OCI-LY7 (cell line): ENCODE measurements at regions of chrX and their contacts with region 1.

Region 1: DNA sequence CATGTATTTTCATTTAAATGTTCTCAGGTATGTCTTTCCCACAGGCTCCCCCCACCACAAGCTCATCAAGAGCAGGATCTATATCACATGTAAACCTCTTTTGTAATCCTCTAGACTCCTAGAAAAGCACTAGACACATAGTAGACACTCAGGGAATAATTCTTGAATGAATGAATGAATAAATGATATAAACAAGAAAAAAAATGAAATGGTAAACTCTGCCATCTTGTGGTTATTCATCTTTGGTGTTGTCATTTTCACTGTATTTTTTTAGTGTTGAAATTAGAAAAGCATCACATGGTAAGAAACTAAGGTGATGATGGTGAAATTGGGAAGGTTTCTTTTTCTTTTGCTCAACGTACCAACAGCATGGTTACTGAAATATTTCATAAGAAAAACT is 34.2 kb upstream of the C1GALT1C1 start:
- DNase-seq: peak; percentile 49
- H3K4me3 ChIP-seq: no peak overlapping the region
- H3K27ac ChIP-seq: no peak overlapping the region
- H3K4me1 ChIP-seq: no peaks in the 10 kb centered on the region
- CTCF ChIP-seq: peak; percentile 75

Region 2: GRCh38 chrX:120350450-120351138 is 313.5 kb before region 1 on chrX:
- CTCF ChIA-PET with region 1: no interaction called
- POLR2A ChIA-PET with region 1: no interaction called
- intact Hi-C with region 1: no loop called
- DNase-seq: no peak
- H3K4me3 ChIP-seq: no peak overlapping the region
- H3K27ac ChIP-seq: no peak overlapping the region
- H3K4me1 ChIP-seq: no peaks in the 10 kb centered on the region
- CTCF ChIP-seq: no peak

Region 3: GRCh38 chrX:120499301-120500072 is 164.6 kb before region 1 on chrX:
- CTCF ChIA-PET with region 1: interaction called, 4 read pairs
- POLR2A ChIA-PET with region 1: interaction called, 4 read pairs
- intact Hi-C with region 1: loop called (anchors 1 kb)
- DNase-seq: no peak
- H3K4me3 ChIP-seq: no peak overlapping the region
- H3K27ac ChIP-seq: no peak overlapping the region
- H3K4me1 ChIP-seq: no peaks in the 10 kb centered on the region
- CTCF ChIP-seq: no peak

Region 4: DNA sequence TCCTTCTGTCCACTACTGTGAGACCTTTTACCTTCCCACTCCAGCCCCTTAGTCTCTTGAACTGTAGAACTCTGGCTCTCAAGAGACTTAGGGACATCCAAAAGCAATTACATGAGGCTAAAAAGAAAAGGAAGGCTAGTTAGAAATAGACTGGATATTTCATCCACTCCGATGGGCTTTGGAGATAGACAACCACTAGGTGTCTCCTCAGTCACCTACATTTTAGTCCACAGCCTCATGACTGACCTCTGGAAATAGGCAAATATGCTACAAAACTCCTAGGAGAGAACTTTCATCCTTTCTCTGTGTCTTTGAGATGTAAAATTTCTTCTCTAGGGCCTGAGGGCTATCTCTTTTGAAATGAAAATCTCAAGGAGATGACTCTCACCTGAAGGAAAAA is 149.8 kb before region 1 on chrX:
- CTCF ChIA-PET with region 1: no interaction called
- POLR2A ChIA-PET with region 1: interaction called, 4 read pairs
- intact Hi-C with region 1: loop called (anchors 1 kb)
- DNase-seq: peak; percentile 45
- H3K4me3 ChIP-seq: no peak overlapping the region
- H3K27ac ChIP-seq: no peak overlapping the region
- H3K4me1 ChIP-seq: no peaks in the 10 kb centered on the region
- CTCF ChIP-seq: peak; percentile 77

Region 5: DNA sequence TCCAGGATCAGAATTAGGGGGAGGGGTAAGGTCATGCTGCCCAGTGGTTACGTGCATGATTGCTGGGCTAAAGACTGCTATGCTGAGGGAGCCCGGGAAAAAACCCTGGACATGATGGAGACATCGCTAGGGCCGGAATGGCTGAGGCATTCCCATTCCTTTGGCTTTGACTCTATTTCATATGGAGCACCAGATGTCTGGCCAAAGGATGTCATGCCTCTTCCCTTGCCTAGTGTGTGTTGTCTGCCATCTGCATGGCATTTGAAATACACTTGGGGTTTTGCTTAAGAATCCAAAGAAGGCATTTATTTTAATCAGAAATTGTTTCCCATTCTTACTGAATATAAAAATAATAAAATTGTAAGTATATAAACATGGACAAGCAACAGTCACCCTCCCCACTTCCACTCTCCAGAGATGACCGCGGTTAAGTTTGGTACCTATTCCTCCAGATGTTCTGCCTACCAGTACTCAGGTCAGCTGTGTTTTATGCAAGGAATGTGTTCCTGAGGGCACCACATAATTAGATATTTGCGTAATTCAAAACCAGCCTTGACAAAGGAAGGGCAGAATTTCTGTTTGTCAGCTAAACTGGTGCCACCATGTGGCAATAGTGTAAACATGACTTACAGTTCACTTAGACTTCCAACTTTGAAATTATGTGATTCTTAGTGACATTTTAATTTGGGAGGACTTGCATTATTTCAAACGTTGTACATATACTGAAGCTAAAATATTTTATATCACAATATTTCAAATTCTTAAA is 105.7 kb after region 1 on chrX:
- CTCF ChIA-PET with region 1: no interaction called
- POLR2A ChIA-PET with region 1: interaction called, 3 read pairs
- intact Hi-C with region 1: loop called (anchors 5 kb)
- DNase-seq: peak; percentile 68
- H3K4me3 ChIP-seq: no peak overlapping the region
- H3K27ac ChIP-seq: no peak overlapping the region
- H3K4me1 ChIP-seq: peaks cover 12% of the 10 kb centered on the region
- CTCF ChIP-seq: peak; percentile 79